Mammary epithelial cell (primary cell): ENCODE measurements at regions of chr21 and their contacts with region 1.

Region 1: DNA sequence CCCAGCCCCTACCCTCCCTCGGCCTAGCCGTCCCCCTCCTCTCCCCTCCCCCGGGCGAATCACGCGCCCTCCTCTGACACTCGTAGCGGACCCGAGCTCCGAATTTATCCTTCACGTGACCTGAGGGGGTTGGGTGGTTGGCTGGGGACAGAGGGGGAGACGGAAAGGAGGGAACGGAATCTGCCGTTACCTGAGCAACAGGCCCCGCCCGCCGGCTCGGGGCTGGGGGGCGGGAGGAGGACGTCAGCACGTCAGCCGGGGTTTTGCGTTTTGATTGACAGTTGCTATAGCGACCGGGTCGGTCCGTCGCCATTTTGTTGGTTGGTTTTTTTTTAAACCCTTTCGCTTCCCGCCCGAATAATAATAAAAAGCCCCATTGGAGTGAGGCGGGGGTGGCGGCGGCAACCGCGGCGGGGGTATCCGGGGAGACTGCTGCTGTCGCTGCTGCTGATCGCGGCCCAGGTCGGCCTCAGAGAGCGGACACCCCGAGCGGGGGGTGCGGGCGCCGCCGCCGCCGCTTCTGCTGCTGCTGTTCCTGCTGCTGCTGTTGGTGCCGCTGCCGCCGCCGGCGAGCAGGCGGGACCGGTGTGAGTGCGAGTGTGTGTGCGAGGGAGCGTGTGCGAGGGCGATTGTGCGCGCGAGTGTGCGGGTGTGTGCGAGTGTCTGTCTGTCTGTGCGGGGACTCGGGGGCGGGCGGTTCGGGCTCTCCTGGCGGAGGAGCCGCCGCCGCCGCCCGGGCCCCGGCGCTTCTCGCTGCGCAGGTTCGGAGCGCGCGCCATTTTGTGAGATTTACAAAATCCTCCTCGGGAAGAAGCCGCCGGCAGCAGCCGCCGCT is at the start of gene DYRK1A:
- DNase-seq: peak; percentile 99
- H3K4me3 ChIP-seq: peak within 1 kb of the TSS; percentile 88 to 92 (median 92)
- H3K27ac ChIP-seq: peak within 1 kb of the TSS; percentile 96
- H3K4me1 ChIP-seq: peaks cover 26% of the 10 kb centered on the region
- H3K27me3 ChIP-seq: no peaks in the 10 kb centered on the region
- CTCF ChIP-seq: no peak
- total RNA-seq, gene DYRK1A: 42.5 to 73.2 TPM

Region 2: DNA sequence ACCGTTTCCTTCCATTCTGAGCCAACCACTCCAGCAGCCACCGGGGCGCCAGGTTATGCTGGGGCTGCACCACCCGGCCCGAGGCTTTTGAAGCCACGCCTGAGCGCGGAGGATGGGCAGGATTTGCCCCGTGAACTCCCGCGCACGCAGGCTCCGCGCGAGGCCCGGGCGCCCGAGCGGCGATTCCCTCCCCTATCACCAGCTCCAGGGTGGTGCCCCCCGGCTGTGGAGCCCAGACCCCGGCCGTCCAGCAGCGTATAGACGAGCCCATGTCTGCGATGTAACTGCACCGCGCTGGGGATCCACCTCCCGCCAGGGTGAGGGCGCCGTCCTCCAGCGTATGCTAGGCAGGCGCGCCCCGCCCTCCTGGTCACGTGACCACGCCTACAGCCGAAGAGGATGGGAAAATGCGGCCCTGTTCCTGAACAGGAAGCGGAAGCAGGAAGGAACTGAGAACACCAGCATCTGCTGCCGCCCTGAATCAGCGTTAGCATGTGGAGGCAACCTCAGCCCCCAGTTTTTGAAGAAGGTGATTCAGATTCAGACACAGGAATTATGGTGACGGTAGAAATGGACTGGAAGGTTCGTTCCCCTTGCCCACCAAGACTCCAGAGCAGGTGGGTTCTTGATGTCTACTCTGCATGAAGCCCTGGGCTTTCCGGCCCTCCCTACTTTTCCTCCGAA is 145.6 kb before region 1 on chr21:
- CTCF ChIA-PET with region 1: no interaction called
- dilution Hi-C with region 1: no loop called
- in situ Hi-C with region 1: no loop called
- intact Hi-C with region 1: loop called (anchors 2 kb)
- DNase-seq: peak; percentile 68
- H3K4me3 ChIP-seq: peak overlapping the region; percentile 59 to 75 (median 61)
- H3K27ac ChIP-seq: peak overlapping the region; percentile 26
- H3K4me1 ChIP-seq: peaks cover 6% of the 10 kb centered on the region
- H3K27me3 ChIP-seq: no peaks in the 10 kb centered on the region
- CTCF ChIP-seq: peak in 1 of 2 donors; percentile 42

Region 3: GRCh38 chr21:37267269-37268184 is 99.2 kb before region 1 on chr21 and contains the start of gene VPS26C:
- CTCF ChIA-PET with region 1: no interaction called
- dilution Hi-C with region 1: no loop called
- in situ Hi-C with region 1: loop called in 1 of 2 experiments (anchors 25 kb)
- intact Hi-C with region 1: loop called (anchors 1 kb)
- DNase-seq: peak; percentile 100
- H3K4me3 ChIP-seq: peak within 1 kb of the TSS; percentile 61 to 80 (median 80)
- H3K27ac ChIP-seq: peak within 1 kb of the TSS; percentile 99
- H3K4me1 ChIP-seq: peaks cover 22% of the 10 kb centered on the region
- H3K27me3 ChIP-seq: no peaks in the 10 kb centered on the region
- CTCF ChIP-seq: no peak
- total RNA-seq, gene VPS26C: 46.2 to 54.8 TPM

Region 4: GRCh38 chr21:37430184-37430821 is 63.6 kb after region 1 on chr21:
- CTCF ChIA-PET with region 1: no interaction called
- dilution Hi-C with region 1: no loop called
- in situ Hi-C with region 1: no loop called
- intact Hi-C with region 1: no loop called
- DNase-seq: peak; percentile 66
- H3K4me3 ChIP-seq: no peak overlapping the region
- H3K27ac ChIP-seq: no peak overlapping the region
- H3K4me1 ChIP-seq: peaks cover 8% of the 10 kb centered on the region
- H3K27me3 ChIP-seq: no peaks in the 10 kb centered on the region
- CTCF ChIP-seq: no peak

Region 5: DNA sequence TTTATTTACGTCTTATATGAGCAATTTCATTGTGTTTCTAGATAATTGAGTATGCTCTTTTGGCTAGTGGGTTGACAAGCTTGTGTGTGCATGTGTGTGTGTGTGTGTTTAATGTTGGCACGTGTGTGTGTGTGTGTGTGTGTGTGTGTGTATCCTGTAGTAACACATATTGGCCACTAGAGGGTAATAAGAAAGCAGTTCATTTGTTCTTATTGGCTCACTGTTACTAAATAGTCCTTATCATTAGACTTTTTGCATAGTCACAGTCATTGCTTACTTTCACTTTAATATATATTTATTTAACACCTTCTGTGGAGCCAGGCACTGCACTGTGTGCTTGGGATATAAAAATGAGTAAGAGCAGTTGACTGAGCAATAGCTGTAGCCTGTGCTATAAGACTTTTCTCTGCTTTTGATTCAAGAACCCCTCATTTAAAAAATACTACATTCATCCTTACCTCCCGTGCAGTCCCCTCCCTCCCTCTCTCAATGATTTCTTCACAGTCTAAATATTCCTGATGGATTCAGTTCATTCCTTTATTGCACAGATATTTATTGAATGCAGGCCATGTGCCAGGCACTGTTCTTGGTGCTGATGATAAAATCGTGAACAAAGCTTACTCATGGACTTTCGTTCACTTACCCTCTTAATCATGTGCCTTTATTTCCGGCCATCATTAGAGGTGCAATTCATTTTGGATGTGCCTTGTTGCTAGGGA is 96.5 kb after region 1 on chr21:
- CTCF ChIA-PET with region 1: no interaction called
- dilution Hi-C with region 1: no loop called
- in situ Hi-C with region 1: no loop called
- intact Hi-C with region 1: loop called (anchors 5 kb)
- DNase-seq: peak; percentile 66
- H3K4me3 ChIP-seq: peak overlapping the region; percentile 4 to 47 (median 26)
- H3K27ac ChIP-seq: peak overlapping the region; percentile 64
- H3K4me1 ChIP-seq: peaks cover 8% of the 10 kb centered on the region
- H3K27me3 ChIP-seq: no peaks in the 10 kb centered on the region
- CTCF ChIP-seq: peak; percentile 72 to 76